AG04449 (cell line): ENCODE measurements at regions of chr2 and their contacts with region 1.

Region 1: DNA sequence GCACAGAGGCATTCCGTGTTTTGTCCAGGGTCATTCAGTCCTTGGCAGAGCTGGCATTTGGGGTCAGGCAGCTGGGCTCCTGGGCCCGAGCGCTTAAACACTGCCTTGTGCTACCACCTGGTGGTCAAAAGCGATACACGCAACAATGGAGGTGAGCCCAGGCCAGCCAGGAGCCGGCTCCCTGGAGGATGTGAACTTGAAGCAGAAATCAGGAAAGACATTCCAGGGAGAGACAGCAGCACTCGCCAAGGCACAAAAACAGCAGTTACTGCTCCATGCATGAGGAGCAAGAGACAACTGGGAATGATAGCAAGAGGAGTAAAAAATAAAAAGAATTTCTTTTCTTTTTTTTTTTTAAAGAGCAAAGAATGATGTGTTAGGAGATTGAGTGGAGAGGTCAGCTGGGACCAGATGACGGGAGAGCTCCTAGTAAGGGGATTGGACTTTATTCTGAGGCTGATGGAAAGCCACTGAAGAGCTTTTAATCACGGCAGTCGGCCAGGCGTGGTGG is 20.7 kb downstream of the SCYGR8 start:
- DNase-seq: peak; percentile 7
- H3K4me3 ChIP-seq: no peak overlapping the region
- CTCF ChIP-seq: peak; percentile 88

Region 2: GRCh38 chr2:227130636-227131035 is 635.8 kb before region 1 on chr2:
- CTCF ChIA-PET with region 1: interaction called, 13 read pairs
- POLR2A ChIA-PET with region 1: no interaction called
- DNase-seq: no peak
- H3K4me3 ChIP-seq: no peak overlapping the region
- CTCF ChIP-seq: no peak

Region 3: DNA sequence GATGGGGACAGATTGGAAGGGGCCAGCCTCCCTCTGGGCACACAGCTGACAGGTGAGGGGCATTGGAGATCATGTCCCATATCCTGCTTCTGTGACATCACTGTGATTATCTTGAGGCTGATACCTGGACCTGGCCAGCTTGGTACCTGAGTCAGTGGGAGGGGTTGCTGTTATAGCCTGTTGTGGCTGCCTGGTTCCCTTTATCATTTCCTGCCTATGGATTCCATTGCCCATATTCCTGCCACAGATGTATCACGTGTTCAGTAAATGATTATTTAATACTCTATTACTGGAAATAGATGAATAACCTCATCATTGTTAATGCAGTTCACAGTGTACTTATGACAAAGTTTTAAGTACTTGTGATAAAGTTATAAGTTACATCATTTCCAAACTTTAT is 370.9 kb before region 1 on chr2:
- CTCF ChIA-PET with region 1: interaction called, 14 read pairs
- POLR2A ChIA-PET with region 1: no interaction called
- DNase-seq: no peak
- H3K4me3 ChIP-seq: no peak overlapping the region
- CTCF ChIP-seq: no peak

Region 4: GRCh38 chr2:227406177-227407031 is 360.0 kb before region 1 on chr2:
- CTCF ChIA-PET with region 1: interaction called, 103 read pairs
- POLR2A ChIA-PET with region 1: interaction called, 3 read pairs
- DNase-seq: peak; percentile 84
- H3K4me3 ChIP-seq: peak overlapping the region; percentile 1; the same call in 1 of the 2 replicates
- CTCF ChIP-seq: peak; percentile 62

Region 5: GRCh38 chr2:227415538-227416424 is 350.6 kb before region 1 on chr2:
- CTCF ChIA-PET with region 1: interaction called, 30 read pairs
- POLR2A ChIA-PET with region 1: no interaction called
- DNase-seq: no peak
- H3K4me3 ChIP-seq: no peak overlapping the region
- CTCF ChIP-seq: no peak

Region 6: DNA sequence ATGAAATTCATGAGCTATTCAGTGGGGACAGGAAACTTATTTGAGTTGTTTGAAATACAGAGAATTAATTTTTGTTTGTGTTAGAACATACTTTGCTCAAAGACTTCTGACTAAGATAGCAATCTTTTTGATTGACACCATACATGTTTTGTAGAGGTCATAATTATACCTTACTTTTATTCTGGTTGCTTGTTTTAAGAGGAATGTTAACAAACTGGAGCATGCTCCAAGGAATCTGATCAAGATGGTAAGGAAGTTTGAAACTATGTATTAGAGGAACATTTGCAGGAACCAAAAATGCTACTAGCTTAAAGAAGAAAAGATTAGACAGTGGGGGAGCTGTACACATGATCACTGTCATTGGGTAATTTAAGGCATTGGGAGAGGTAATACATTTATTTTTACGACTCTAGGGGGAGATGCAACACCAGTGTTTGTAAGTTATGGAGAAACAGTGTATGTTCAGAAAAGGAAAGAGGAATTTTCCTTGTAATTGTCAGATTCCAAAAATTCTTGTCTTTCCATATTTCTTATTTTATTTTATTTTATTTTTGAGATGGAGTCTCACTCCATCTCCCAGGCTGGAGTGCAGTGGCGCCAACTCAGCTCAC is 286.5 kb before region 1 on chr2:
- CTCF ChIA-PET with region 1: interaction called, 17 read pairs
- POLR2A ChIA-PET with region 1: no interaction called
- DNase-seq: no peak
- H3K4me3 ChIP-seq: no peak overlapping the region
- CTCF ChIP-seq: no peak

Region 7: GRCh38 chr2:227519036-227519292 is 247.5 kb before region 1 on chr2:
- CTCF ChIA-PET with region 1: no interaction called
- POLR2A ChIA-PET with region 1: no interaction called
- DNase-seq: no peak
- H3K4me3 ChIP-seq: no peak overlapping the region
- CTCF ChIP-seq: no peak

Region 8: DNA sequence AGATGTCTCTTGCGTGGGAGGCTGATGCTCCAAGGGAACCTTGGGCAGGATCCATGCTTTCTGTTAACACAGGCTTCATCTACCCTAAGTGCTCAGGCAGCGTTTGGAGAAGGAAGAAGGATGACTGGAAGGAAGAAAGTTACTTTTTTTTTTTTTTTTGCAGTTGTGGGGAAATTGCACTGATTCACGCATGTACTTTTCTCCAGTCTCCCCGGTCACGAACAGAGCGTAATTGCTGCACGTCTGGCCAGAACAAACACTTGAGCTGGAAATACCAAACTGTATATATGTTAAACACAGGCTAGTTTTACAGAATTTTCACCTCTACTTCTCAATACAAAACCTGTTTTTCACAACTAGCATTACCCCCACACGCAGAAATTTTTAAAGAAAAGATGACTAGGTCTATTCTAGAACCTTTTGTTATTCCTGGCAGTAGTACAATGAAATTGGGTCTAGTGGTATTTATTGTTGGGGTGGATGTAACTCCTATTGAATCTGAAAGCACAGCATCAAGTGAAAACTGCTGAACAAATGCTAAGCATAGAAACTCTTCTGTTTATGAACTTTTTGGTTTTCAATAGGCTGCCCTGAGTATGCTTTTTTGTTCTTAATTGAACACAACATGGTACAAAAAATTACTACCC is 109.1 kb before region 1 on chr2:
- CTCF ChIA-PET with region 1: interaction called, 62 read pairs
- POLR2A ChIA-PET with region 1: no interaction called
- DNase-seq: no peak
- H3K4me3 ChIP-seq: no peak overlapping the region
- CTCF ChIP-seq: no peak